PC-9 (cell line): ENCODE measurements at regions of chr3 and their contacts with region 1.

Region 1: GRCh38 chr3:49120438-49121131 is at the start of gene USP19:
- DNase-seq: peak; percentile 76 to 88
- H3K4me3 ChIP-seq: peak within 1 kb of the TSS; percentile 69
- H3K27ac ChIP-seq: peak within 1 kb of the TSS; percentile 76
- H3K4me1 ChIP-seq: peaks cover 10% of the 10 kb centered on the region
- H3K27me3 ChIP-seq: no peaks in the 10 kb centered on the region
- CTCF ChIP-seq: no peak
- total RNA-seq, gene USP19: 72.1 TPM in 2 replicates

Region 2: DNA sequence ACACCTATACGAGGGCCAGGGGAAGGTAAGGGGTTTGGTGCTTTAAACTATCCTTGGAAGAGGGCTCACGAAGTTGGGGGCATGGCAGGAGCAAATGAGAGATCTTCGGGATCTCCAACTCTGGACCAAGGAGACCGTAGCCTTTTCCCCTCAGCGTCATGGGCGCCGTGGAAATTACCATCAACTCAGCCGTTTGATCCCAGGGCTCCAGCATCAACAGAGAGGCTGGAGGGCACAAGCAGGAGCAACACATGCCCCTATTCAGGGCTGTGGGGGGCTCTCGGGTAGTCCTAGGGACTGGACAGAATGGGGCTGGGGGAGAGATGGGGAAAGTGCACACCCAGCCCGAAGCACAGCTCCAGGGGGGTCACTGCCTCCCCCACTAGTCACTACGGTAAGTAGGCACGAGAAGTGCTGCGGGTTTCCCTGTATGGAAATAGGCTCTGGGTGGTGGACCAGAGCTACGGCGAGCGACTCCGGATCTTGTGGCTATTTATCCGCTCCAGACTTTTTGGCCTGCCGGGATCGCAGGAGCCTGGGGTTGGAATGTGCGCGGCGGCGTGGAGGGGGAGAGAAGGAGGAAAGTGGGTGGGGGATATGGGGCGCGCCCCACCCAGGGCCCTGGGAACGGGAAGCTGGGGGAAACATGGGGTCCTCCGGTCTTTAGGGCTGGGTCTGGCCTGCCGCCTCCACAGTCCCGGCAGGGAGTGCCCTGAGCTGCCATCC is 12.8 kb after region 1 on chr3:
- CTCF ChIA-PET with region 1: no interaction called
- POLR2A ChIA-PET with region 1: interaction called, 35 read pairs
- intact Hi-C with region 1: loop called (anchors 1 kb)
- DNase-seq: peak; percentile 71 to 85
- H3K4me3 ChIP-seq: peak overlapping the region; percentile 78
- H3K27ac ChIP-seq: peak overlapping the region; percentile 92
- H3K4me1 ChIP-seq: peaks cover 19% of the 10 kb centered on the region
- H3K27me3 ChIP-seq: no peaks in the 10 kb centered on the region
- CTCF ChIP-seq: no peak

Region 3: GRCh38 chr3:49173116-49173791 is 52.7 kb after region 1 on chr3:
- CTCF ChIA-PET with region 1: no interaction called
- POLR2A ChIA-PET with region 1: no interaction called
- intact Hi-C with region 1: no loop called
- DNase-seq: no peak
- H3K4me3 ChIP-seq: no peak overlapping the region
- H3K27ac ChIP-seq: no peak overlapping the region
- H3K4me1 ChIP-seq: no peaks in the 10 kb centered on the region
- H3K27me3 ChIP-seq: no peaks in the 10 kb centered on the region
- CTCF ChIP-seq: no peak